Gastrocnemius medialis (tissue), 4 donors: ENCODE measurements at regions of chr12 and their contacts with region 1.

Region 1: GRCh38 chr12:89461649-89462612 is 62.7 kb downstream of the GALNT4 start:
- DNase-seq: no peak
- ATAC-seq: peak; percentile 90 to 93
- H3K4me3 ChIP-seq: peak overlapping the region in 2 of 4 donors; percentile 5 to 6
- H3K27ac ChIP-seq: peak overlapping the region in 2 of 4 donors; percentile 7 to 13
- H3K4me1 ChIP-seq: peaks cover 3 to 14% of the 10 kb centered on the region in 2 donors
- H3K27me3 ChIP-seq: no peaks in the 10 kb centered on the region
- CTCF ChIP-seq: peak; percentile 46 to 69 (median 62)
- POLR2A ChIP-seq: no peak

Region 2: GRCh38 chr12:89019408-89020120 is 442.4 kb before region 1 on chr12:
- in situ Hi-C with region 1: loop called (anchors 5 to 25 kb)
- intact Hi-C with region 1: loop called (anchors 1 kb)
- DNase-seq: peak; percentile 55 to 59
- ATAC-seq: peak; percentile 90 to 92
- H3K4me3 ChIP-seq: peak overlapping the region; percentile 21 to 42 (median 36)
- H3K27ac ChIP-seq: no peak overlapping the region
- H3K4me1 ChIP-seq: peaks cover 0 to 6% of the 10 kb centered on the region in 2 donors
- H3K27me3 ChIP-seq: no peaks in the 10 kb centered on the region
- CTCF ChIP-seq: peak; percentile 48 to 83 (median 77)
- POLR2A ChIP-seq: no peak

Region 3: DNA sequence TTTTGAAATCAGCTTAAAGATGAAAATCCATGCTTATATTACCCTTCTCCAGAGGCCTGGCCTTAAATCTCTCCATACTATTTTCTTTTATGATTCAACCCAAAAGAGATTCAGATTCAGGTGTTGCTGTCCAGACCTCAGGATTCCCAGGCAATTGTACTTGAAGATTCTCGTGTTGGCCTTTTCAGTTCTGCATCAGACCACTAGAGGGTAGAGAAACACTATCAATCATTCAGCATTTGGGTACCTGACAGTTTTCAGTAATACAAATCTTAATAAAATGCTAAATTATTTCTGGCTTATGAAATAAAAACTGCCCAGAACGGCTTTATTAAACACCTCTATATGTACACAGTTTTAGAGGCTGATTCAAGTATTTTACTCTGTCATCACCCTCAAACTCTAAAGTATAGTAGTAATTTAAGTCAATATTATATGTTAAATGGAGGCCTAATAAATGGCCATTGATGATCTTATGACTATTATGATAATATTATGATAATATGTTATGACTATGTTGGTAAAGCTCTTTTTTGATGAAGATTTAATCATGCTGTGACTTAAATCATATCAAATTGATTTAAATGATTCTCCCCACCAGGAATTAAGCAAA is 410.8 kb before region 1 on chr12:
- in situ Hi-C with region 1: loop called in 3 of 4 experiments (anchors 5 to 10 kb)
- intact Hi-C with region 1: loop called (anchors 1 kb)
- DNase-seq: no peak
- ATAC-seq: no peak
- H3K4me3 ChIP-seq: no peak overlapping the region
- H3K27ac ChIP-seq: no peak overlapping the region
- H3K4me1 ChIP-seq: no peaks in the 10 kb centered on the region
- H3K27me3 ChIP-seq: no peaks in the 10 kb centered on the region
- CTCF ChIP-seq: peak; percentile 54 to 88 (median 74)
- POLR2A ChIP-seq: no peak

Region 4: DNA sequence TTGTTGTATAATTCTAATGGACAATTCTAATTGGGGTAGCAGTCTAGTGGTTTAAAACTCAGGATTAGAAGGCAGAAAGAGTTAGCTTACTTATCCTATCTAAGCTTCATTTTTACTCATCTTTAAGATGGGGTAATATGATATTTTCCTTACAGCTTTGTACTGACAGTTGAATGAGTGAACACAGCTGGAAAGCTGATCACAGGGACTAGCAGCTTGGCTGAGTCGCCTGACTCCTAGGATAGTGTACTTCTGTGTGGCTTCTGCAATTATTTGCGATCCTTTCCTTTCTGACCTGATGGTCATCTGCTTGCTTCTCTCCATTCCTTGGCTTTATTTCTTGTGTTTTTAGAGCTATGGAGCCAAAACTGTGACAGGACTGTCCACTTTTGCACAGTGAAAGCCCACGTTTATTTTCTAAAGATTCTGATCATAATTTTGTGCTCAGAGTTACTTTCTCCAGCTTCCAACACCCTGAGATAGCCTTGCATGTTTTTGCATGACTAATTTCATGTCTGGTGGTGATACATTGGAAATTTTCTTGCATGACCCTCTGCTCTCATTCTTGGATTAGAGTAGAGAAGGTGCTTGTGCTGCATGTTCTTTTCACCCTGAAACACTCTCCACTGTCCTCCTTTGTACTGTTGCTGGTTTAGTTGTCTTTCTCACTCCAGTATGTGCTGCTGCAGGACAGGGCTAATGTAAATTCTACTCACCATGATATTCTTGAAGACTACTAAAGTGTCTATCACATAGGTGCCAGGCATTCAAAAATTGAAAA is 623.8 kb after region 1 on chr12:
- in situ Hi-C with region 1: no loop called
- intact Hi-C with region 1: no loop called
- DNase-seq: no peak
- ATAC-seq: no peak
- H3K4me3 ChIP-seq: no peak overlapping the region
- H3K27ac ChIP-seq: no peak overlapping the region
- H3K4me1 ChIP-seq: no peaks in the 10 kb centered on the region
- H3K27me3 ChIP-seq: no peaks in the 10 kb centered on the region
- CTCF ChIP-seq: no peak
- POLR2A ChIP-seq: no peak